ENCODE measurements at regions of chr17 and their contacts with region 1.

Region 1: DNA sequence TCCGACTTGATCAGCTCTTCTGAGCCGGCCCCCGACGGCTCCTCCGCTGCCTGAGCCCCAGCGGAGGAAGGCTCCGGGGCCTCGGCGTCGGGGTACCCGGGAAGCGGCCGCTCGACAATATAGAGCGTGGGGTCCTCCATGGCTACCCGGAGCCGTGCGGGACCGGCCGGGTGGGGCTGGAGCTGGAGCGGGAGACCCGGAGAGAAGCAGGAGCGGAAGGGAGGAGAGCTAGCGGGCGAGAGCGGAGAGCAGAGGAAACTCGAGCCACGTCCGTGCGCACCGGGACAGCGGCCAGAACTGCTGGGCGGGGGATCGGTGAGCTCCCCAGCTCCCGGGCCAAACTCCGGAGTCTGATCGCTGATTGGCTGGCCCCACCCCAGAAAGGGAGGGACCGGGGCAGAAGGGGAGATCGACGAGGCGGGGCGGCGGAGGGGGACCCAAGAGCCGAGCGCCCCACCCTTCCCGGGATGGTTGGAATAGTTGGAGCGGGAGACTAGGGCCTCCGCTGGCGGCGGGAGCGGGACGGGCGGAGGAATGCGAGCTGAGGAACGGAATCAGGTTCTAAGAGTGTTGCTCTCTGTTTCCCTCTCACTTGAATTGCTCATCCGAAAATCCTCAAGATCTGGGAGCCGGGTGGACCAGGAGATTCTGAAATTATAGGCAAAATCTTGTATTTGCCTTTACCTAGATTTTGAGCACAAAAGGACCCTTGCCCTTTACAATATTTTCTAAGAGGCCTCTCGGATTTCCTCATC is at the start of gene CAVIN1:
- DNase-seq: peak; percentile 98 to 99
- H3K4me3 ChIP-seq: peak within 1 kb of the TSS; percentile 97
- H3K4me3 Mint-ChIP-seq: peak within 1 kb of the TSS; percentile 85
- H3K27ac Mint-ChIP-seq: peak within 1 kb of the TSS; percentile 74
- H3K4me1 ChIP-seq: peaks cover 18% of the 10 kb centered on the region
- H3K4me1 Mint-ChIP-seq: peaks cover 20% of the 10 kb centered on the region
- H3K27me3 ChIP-seq: no peaks in the 10 kb centered on the region
- H3K27me3 Mint-ChIP-seq: no peaks in the 10 kb centered on the region
- CTCF ChIP-seq: no peak
- total RNA-seq, gene CAVIN1: 143 and 173 TPM in 2 replicates

Region 2: DNA sequence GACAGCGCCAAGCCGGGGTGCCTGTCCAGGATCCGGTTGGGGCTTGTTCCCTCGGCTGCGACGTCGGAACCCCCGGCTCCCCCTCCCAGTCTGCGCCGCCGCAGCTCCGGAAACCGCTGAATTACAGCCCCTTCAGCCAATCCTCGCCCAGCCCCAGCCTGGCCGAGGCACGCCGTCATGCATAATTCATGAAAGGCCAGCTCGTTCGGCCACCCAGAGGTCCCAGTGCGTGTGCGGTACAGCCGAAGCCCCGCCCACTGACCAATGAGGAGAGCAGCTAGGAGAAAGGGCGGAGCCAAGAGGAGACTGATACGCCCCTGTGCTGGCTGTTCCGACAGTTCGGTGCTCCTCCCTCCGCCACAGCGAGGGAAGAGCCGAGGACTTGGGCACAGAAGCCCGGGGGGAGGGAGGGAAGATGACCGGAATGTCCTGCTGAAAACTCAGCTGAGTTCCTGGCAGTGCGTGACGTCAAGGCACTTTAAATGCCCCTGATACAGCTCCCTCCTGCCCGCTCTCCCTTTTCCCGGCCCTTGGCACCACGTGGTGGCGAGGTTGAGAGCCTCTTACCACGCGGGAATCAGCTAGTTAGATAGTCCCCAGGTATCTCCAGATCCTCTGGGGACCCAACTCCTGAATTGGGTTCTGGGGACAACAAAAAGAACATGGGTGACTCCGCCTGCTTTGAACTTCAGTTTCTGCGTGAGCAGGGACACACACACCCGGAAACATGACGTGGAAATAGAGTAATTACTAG is 34.6 kb before region 1 on chr17 and contains the start of gene STAT3:
- CTCF ChIA-PET with region 1: interaction called, 9 read pairs
- POLR2A ChIA-PET with region 1: interaction called, 53 read pairs
- intact Hi-C with region 1: loop called (anchors 1 kb)
- DNase-seq: peak; percentile 100
- H3K4me3 ChIP-seq: peak within 1 kb of the TSS; percentile 98
- H3K4me3 Mint-ChIP-seq: peak within 1 kb of the TSS; percentile 98
- H3K27ac Mint-ChIP-seq: peak within 1 kb of the TSS; percentile 91
- H3K4me1 ChIP-seq: peaks cover 15% of the 10 kb centered on the region
- H3K4me1 Mint-ChIP-seq: peaks cover 24% of the 10 kb centered on the region
- H3K27me3 ChIP-seq: no peaks in the 10 kb centered on the region
- H3K27me3 Mint-ChIP-seq: no peaks in the 10 kb centered on the region
- CTCF ChIP-seq: no peak
- total RNA-seq, gene STAT3: 72.1 and 73.7 TPM in 2 replicates

Region 3: GRCh38 chr17:42459256-42459800 is 36.2 kb after region 1 on chr17:
- CTCF ChIA-PET with region 1: interaction called, 5 read pairs
- POLR2A ChIA-PET with region 1: interaction called, 6 read pairs
- intact Hi-C with region 1: loop called (anchors 2 kb)
- DNase-seq: peak; percentile 54 to 68
- H3K4me3 ChIP-seq: peak overlapping the region; percentile 82
- H3K4me3 Mint-ChIP-seq: peak overlapping the region; percentile 100
- H3K27ac Mint-ChIP-seq: peak overlapping the region; percentile 98
- H3K4me1 ChIP-seq: peaks cover 33% of the 10 kb centered on the region
- H3K4me1 Mint-ChIP-seq: peaks cover 35% of the 10 kb centered on the region
- H3K27me3 ChIP-seq: no peaks in the 10 kb centered on the region
- H3K27me3 Mint-ChIP-seq: no peaks in the 10 kb centered on the region
- CTCF ChIP-seq: peak; percentile 32 to 51

Region 4: GRCh38 chr17:42467859-42468258 is 44.7 kb after region 1 on chr17:
- CTCF ChIA-PET with region 1: no interaction called
- POLR2A ChIA-PET with region 1: interaction called, 11 read pairs
- intact Hi-C with region 1: no loop called
- DNase-seq: peak; percentile 61 to 75
- H3K4me3 ChIP-seq: no peak overlapping the region
- H3K4me3 Mint-ChIP-seq: peak overlapping the region; percentile 36
- H3K27ac Mint-ChIP-seq: peak overlapping the region; percentile 43
- H3K4me1 ChIP-seq: peaks cover 46% of the 10 kb centered on the region
- H3K4me1 Mint-ChIP-seq: peaks cover 29% of the 10 kb centered on the region
- H3K27me3 ChIP-seq: no peaks in the 10 kb centered on the region
- H3K27me3 Mint-ChIP-seq: no peaks in the 10 kb centered on the region
- CTCF ChIP-seq: no peak

Region 5: DNA sequence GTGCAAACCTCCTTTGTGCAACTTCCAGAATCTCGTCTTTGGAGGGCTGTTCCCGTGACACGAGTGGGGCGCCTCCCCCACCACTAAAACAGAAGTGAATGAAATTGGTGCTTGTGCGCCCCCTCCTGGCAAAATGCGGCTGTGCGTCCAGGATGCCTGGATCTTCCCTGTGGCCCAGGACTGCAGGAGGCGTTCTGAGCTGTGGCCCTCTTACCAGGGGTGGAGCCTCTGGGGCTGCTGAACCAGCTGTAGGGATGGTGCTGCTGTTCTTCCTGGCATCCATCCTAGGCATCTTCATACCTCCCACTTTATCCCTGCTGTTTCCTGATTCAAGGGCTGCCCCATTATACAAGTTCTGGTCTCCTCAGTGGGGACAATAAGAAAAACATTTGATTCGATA is 94.4 kb after region 1 on chr17:
- CTCF ChIA-PET with region 1: interaction called, 13 read pairs
- POLR2A ChIA-PET with region 1: interaction called, 9 read pairs
- intact Hi-C with region 1: loop called (anchors 1 kb)
- DNase-seq: peak; percentile 82 to 89
- H3K4me3 ChIP-seq: no peak overlapping the region
- H3K4me3 Mint-ChIP-seq: no peak overlapping the region
- H3K27ac Mint-ChIP-seq: peak overlapping the region; percentile 90
- H3K4me1 ChIP-seq: peaks cover 51% of the 10 kb centered on the region
- H3K4me1 Mint-ChIP-seq: peaks cover 46% of the 10 kb centered on the region
- H3K27me3 ChIP-seq: no peaks in the 10 kb centered on the region
- H3K27me3 Mint-ChIP-seq: no peaks in the 10 kb centered on the region
- CTCF ChIP-seq: peak; percentile 90 to 97

Region 6: DNA sequence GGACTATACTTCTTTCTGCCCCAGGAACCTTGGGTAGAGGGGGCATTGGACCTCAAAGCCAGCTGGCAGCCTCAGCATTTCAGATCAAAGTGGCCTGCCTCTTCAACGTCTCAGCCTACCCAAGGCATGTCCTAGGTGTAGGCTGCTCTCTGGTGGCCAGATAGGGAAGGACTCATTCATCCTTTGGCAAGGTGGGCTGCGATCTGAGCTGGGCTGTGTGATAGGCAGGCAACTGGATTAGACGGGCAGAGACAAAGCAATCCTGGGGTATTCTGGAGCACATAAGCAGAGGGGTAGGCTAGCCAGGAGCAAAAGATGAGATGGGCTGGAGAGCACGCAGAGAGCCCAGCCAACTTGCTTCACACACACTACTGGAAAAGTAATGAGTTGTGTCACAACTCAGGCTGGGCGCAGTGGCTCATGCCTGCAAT is 104.2 kb after region 1 on chr17:
- CTCF ChIA-PET with region 1: interaction called, 22 read pairs
- POLR2A ChIA-PET with region 1: interaction called, 4 read pairs
- intact Hi-C with region 1: no loop called
- DNase-seq: peak; percentile 81 to 82
- H3K4me3 ChIP-seq: no peak overlapping the region
- H3K4me3 Mint-ChIP-seq: no peak overlapping the region
- H3K27ac Mint-ChIP-seq: peak overlapping the region; percentile 55
- H3K4me1 ChIP-seq: peaks cover 46% of the 10 kb centered on the region
- H3K4me1 Mint-ChIP-seq: peaks cover 44% of the 10 kb centered on the region
- H3K27me3 ChIP-seq: no peaks in the 10 kb centered on the region
- H3K27me3 Mint-ChIP-seq: no peaks in the 10 kb centered on the region
- CTCF ChIP-seq: peak; percentile 82 to 90

Region 7: DNA sequence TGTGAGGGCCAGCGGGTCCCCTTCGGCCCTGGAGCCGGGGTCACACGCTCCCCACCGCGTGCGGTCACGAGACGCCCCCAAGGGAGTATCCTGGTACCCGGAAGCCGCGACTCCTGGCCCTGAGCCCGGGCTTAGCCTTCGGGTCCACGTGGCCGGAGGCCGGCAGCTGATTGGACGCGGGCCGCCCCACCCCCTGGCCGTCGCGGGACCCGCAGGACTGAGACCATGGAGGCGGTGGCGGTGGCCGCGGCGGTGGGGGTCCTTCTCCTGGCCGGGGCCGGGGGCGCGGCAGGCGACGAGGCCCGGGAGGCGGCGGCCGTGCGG is 112.9 kb after region 1 on chr17 and contains the start of gene NAGLU:
- CTCF ChIA-PET with region 1: no interaction called
- POLR2A ChIA-PET with region 1: interaction called, 10 read pairs
- intact Hi-C with region 1: no loop called
- DNase-seq: peak; percentile 93 to 96
- H3K4me3 ChIP-seq: peak within 1 kb of the TSS; percentile 50
- H3K4me3 Mint-ChIP-seq: peak within 1 kb of the TSS; percentile 72
- H3K27ac Mint-ChIP-seq: peak within 1 kb of the TSS; percentile 24
- H3K4me1 ChIP-seq: peaks cover 28% of the 10 kb centered on the region
- H3K4me1 Mint-ChIP-seq: peaks cover 34% of the 10 kb centered on the region
- H3K27me3 ChIP-seq: no peaks in the 10 kb centered on the region
- H3K27me3 Mint-ChIP-seq: no peaks in the 10 kb centered on the region
- CTCF ChIP-seq: no peak
- total RNA-seq, gene NAGLU: 28.7 and 29.2 TPM in 2 replicates

Region 8: GRCh38 chr17:42937712-42938596 is 514.8 kb after region 1 on chr17:
- CTCF ChIA-PET with region 1: no interaction called
- POLR2A ChIA-PET with region 1: no interaction called
- intact Hi-C with region 1: no loop called
- DNase-seq: peak; percentile 65 to 72
- H3K4me3 ChIP-seq: no peak overlapping the region
- H3K4me3 Mint-ChIP-seq: no peak overlapping the region
- H3K27ac Mint-ChIP-seq: no peak overlapping the region
- H3K4me1 ChIP-seq: no peaks in the 10 kb centered on the region
- H3K4me1 Mint-ChIP-seq: no peaks in the 10 kb centered on the region
- H3K27me3 ChIP-seq: no peaks in the 10 kb centered on the region
- H3K27me3 Mint-ChIP-seq: peaks cover 5% of the 10 kb centered on the region
- CTCF ChIP-seq: peak; percentile 75 to 81

Measured in Caco-2 (cell line).